Sciatic nerve (tissue), 2 donors: ENCODE measurements at regions of chr2 and their contacts with region 1.

Region 1: DNA sequence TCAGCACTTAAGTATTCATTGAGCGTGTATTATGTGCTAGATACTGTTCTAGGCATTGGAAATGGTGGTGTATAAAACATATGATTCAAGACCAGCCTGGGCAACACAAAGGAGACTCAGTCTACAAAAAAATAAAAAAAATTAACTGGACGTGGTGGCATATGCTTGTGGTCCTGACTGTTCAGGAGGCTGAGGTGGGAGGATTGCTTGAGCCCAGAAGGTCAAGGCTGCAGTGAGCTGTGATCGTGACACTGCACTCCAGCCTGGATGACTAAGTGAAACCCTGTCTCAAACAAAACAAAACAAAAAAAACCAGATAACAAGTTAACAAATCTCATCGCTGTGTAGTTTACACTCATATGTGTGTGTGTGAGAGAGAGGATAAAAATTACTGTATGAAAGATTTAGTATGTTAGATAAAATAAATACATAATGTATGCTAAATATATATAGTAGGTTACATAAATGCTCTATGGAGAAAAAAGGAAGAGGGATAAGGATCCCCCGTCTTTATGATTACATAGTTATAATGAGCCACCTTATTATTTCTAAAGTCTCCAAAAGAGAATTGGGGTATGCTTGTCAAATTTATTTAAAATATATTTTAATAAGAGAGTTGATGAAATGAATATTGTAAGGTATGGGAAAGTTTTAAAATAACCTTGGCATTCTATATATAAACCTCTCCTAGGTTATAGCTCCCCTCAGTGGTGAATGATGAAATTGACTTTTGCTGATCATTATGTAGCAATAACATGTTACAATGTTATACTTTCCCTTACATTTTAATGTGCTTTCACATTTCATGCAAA is 69.2 kb downstream of the EHBP1 start:
- DNase-seq: no peak
- ATAC-seq: peak; percentile 81

Region 2: DNA sequence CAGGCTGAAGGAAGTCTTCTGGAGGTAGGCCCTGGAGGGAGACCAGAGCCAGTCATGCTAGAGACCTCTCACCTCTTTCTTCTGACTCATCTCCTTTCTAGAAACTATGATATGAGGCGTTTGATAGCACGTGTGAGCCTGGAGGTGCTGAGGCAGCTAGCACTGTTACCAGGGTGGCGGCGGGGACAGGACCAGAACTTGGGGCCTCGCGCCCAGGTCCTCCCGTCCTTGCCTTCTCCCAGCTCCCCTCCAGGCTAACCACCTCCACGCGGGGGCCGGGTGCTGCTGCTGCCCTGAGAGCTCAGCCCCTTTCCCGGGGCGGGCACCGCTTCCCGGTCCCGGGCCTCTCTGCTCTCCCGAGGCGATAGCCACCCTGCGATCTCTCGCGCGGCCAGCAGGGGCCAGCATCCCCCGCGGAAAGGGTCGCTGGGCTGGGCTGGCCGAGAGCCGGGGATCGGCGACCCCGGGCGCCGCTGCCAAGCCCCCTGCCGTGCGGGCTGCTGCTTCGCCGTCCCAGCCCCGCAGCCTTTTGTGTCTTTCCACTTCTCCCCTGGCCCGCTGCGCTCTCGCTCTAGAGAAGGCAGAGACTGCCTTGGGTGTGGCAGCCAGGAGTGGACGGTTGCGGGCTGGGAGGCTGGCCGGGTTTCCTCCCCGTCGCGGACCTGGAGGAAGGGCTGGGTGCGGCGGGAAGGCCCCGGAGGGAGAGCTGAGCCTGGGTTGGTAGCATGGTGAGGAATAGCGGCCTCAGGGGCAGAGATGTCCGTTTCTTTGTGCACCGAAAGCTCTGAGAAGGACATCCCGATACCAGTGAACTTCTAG is 317.8 kb before region 1 on chr2:
- intact Hi-C with region 1: loop called (anchors 5 kb)
- DNase-seq: peak; percentile 89
- ATAC-seq: peak; percentile 89

Region 3: DNA sequence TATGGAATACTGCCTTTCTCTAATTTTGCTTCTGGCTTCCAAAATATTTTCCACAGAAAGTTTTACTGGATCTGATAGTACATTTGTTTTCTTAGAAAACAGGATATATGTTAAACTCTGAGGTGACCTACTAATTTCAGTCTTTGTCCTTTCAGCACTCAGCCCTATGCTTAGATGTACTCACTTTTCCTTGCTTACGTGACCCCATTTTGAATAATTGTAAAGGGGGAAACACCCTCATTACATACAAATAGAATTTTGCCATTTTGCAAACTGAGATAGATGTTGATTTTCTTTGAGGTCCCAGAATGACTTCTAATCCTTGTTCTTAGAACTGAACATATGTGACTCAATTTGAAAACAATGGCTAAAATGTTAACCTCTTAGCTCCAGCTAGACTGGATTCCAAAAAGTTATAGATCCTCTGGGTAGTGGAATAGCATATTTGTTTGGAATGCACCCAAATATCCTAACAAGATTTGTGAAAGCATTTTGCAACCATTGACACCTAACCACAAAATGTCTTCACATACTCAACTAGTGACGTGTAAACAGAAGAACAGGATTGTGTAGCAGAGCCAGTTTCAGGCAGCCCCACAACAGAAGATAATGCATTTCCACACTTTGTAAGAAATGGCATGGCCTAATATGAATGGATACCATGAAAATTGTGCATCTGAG is 114.0 kb before region 1 on chr2:
- intact Hi-C with region 1: no loop called
- DNase-seq: no peak
- ATAC-seq: no peak